Cardiac septum (tissue), 1 donor: ENCODE measurements at regions of chr4 and their contacts with region 1.

Region 1: DNA sequence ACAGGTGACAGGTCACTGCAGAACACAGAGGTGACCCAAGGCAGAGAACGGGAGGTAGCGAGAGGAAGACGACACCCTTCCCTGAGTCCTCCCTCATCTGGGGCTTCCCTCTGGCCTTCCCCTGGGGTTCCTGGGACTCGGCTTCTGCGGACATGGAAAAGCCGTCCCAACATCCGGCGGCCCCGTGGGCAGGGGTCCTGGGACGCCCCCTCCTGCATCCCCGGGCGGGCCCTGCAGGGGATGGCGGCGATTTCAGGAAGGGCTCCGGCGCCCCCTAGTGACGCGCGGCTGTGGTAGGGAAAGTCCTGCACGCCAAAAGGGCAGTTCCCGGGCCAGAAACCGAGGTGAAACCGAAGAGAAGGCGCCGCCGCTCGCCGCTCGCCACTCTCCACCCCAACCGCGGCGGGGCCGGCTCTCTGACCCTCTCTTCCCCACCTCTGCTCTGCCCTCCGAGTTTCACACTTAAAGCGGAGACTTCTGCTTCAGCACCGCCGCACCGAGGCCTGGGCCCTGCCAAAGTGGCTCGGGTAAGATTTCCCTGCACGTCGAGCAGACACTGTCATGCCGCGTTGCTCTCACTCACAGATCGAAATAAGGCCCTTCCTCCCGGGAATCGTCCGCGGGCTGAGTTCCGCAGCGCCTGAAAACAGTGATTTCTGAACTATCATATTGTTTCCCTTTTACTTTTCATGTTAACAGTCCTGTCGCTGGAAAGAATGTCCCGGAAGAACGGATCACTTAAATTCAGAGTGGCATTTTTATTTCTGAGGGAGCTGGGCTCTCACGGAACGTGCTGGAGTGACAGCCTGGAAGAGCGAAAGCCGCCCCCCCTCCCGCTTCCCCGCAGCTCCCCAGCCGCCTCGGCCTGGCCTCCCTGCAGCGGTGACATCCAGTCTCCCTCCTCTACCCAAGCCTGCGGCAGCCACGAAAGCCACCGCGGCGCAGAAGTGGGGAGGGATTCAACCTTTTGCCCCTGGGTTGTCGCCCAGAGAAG is 110.6 kb downstream of the DCTD start:
- DNase-seq: peak; percentile 83

Region 2: GRCh38 chr4:181143250-181143854 is 1663.2 kb before region 1 on chr4:
- intact Hi-C with region 1: loop called (anchors 10 kb)
- DNase-seq: no peak

Region 3: DNA sequence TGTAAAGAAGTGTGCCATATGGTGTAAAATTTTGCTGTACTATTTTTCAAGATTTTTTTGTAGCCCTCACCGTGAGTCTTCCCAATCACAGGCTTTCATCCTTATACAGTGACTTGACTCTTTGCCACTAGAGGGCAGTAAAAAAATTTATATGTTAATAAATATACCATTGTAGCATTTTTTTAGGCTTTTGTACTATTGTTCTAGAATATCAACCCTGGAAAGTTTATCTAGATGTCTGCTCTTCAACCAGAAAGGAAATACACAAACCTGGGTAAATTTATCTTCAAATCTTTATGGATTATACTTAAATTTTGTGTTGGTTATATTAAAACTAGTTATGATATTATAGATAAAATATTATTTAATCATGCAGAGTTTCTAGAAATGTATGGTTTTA is 328.1 kb before region 1 on chr4:
- intact Hi-C with region 1: loop called (anchors 2 kb)
- DNase-seq: no peak

Region 4: GRCh38 chr4:182862141-182862875 is 55.8 kb after region 1 on chr4:
- intact Hi-C with region 1: no loop called
- DNase-seq: no peak

Region 5: DNA sequence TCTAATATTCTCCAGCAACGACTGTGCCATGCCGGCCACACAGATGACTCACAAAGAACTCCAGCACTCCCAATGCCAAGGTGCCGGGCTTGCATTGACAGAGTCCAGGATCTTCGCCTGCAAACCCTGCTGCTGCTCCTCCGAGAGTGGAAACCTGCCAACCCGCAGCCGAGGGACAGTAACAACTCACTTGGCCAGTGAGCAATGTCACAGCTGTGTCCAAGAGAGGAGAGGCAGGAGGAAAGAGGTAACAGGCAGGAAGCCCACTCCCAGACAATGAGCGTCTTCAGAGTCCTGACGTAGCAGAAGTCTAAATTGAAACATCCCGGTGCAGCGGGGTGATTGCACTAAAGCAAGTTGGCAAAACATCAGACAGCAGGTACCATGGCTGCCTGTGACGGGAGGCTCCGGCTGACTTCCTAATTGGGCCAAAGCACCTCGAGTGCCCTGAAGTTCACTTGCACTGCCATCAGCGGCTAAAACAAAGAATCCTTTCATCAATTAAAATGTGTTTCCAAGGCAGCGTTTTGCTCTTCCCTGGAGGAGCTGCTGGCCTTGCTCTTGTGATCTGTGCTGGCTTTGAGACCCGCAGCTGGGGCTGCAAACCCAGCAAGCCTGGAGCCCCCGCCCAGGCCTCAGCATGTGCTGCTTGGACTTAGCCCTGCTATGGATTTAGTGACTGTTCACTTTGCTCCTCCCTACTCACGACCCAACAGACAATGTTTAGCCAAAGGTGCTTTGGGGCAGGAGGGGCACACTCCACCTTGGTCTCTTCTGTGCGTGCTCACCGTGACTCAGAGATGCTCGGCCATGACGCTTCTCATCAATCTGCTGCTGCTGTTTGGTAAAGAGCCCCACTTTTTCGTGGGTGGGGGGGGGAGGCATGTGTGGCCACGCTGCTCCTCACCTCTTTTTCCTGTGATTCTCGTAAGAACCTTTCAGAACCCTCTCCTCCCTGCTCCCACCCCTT is 74.1 kb after region 1 on chr4:
- intact Hi-C with region 1: no loop called
- DNase-seq: no peak

Region 6: DNA sequence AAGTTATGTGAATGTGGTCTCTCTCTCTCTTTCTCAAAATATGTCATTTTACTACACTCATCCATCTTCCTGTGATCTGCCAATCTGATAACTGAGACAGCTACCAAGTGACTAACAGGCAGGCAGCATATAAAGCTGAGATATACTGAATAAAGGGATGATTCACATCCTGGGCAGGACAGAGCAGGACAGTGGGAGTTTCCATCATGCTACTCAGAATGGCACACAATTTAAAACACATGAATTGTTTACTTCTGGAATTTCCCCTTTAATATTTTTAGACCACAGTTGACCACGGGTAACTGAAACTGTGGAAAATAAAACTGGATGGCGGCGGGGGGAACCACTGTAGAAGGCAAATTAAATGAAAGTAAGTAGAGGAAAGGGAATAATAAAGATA is 169.2 kb after region 1 on chr4:
- intact Hi-C with region 1: no loop called
- DNase-seq: no peak